CD8-positive, alpha-beta T cell (primary cell): ENCODE measurements at regions of chr7 and their contacts with region 1.

Region 1: GRCh38 chr7:155961241-155962190 is 149.3 kb upstream of the SHH start:
- DNase-seq: peak in 1 of 9 experiments; percentile 9
- ATAC-seq: no peak
- H3K4me3 ChIP-seq: no peak overlapping the region
- H3K4me3 Mint-ChIP-seq: no peak overlapping the region
- H3K27ac ChIP-seq: no peak overlapping the region
- H3K27ac Mint-ChIP-seq: no peak overlapping the region
- H3K4me1 ChIP-seq: no peaks in the 10 kb centered on the region
- H3K4me1 Mint-ChIP-seq: peaks cover 3% of the 10 kb centered on the region
- H3K27me3 ChIP-seq: no peaks in the 10 kb centered on the region
- H3K27me3 Mint-ChIP-seq: no peaks in the 10 kb centered on the region
- CTCF ChIP-seq: no peak

Region 2: DNA sequence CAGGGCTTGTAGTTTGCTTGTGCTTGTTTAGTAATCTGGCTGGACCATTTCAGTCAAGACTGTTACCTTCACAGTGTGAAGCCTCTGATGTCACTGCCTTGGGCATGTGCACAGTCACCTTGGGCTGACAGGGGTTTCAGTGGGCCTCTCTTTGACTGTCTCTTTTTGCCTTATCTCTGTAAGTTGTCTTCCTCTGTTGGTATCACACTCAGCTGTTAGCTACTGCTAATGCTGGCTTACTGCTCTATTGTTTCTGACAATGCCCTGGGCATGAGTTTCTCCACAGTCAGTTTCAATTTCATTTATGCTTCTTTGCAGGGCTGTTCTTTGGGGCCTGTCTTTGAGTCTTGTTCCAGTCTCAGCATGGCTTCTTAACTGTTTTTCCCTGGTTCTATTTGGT is 52.7 kb after region 1 on chr7:
- CTCF ChIA-PET with region 1: no interaction called
- POLR2A ChIA-PET with region 1: no interaction called
- intact Hi-C with region 1: loop called in 1 of 2 experiments (anchors 2 kb)
- DNase-seq: peak in 1 of 9 experiments; percentile 15
- ATAC-seq: no peak
- H3K4me3 ChIP-seq: no peak overlapping the region
- H3K4me3 Mint-ChIP-seq: no peak overlapping the region
- H3K27ac ChIP-seq: no peak overlapping the region
- H3K27ac Mint-ChIP-seq: no peak overlapping the region
- H3K4me1 ChIP-seq: no peaks in the 10 kb centered on the region
- H3K4me1 Mint-ChIP-seq: no peaks in the 10 kb centered on the region
- H3K27me3 ChIP-seq: no peaks in the 10 kb centered on the region
- H3K27me3 Mint-ChIP-seq: peaks cover 2% of the 10 kb centered on the region
- CTCF ChIP-seq: no peak

Region 3: GRCh38 chr7:156949541-156950380 is 988.2 kb after region 1 on chr7 and contains the start of gene NOM1:
- CTCF ChIA-PET with region 1: no interaction called
- POLR2A ChIA-PET with region 1: no interaction called
- intact Hi-C with region 1: no loop called
- DNase-seq: peak; percentile 85 to 96 (median 92)
- ATAC-seq: peak; percentile 94
- H3K4me3 ChIP-seq: peak within 1 kb of the TSS; percentile 95 to 97
- H3K4me3 Mint-ChIP-seq: peak within 1 kb of the TSS; percentile 97
- H3K27ac ChIP-seq: peak within 1 kb of the TSS; percentile 64 to 77
- H3K27ac Mint-ChIP-seq: peak within 1 kb of the TSS; percentile 79
- H3K4me1 ChIP-seq: peaks cover 25% of the 10 kb centered on the region
- H3K4me1 Mint-ChIP-seq: peaks cover 32% of the 10 kb centered on the region
- H3K27me3 ChIP-seq: no peaks in the 10 kb centered on the region
- H3K27me3 Mint-ChIP-seq: peaks cover 9% of the 10 kb centered on the region
- CTCF ChIP-seq: peak; percentile 67
- total RNA-seq, gene NOM1: 35.2 to 50.9 TPM